Activated CD4-positive, alpha-beta memory T cell treated with anti-CD3 and anti-CD28 coated beads, Interleukin-2, amount 10 ng/mL, durations not matched to agents 7 days and 5 days (primary cell): ENCODE measurements at regions of chr20 and their contacts with region 1.

Region 1: GRCh38 chr20:54093423-54094267 is 23.3 kb upstream of the BCAS1 start:
- DNase-seq: no peak
- H3K4me3 Mint-ChIP-seq: no peak overlapping the region
- H3K27ac Mint-ChIP-seq: no peak overlapping the region
- H3K4me1 Mint-ChIP-seq: no peaks in the 10 kb centered on the region
- H3K27me3 Mint-ChIP-seq: peaks cover 12% of the 10 kb centered on the region

Region 2: GRCh38 chr20:53990768-53991450 is 102.7 kb before region 1 on chr20:
- CTCF ChIA-PET with region 1: no interaction called
- POLR2A ChIA-PET with region 1: no interaction called
- DNase-seq: no peak
- H3K4me3 Mint-ChIP-seq: no peak overlapping the region
- H3K27ac Mint-ChIP-seq: no peak overlapping the region
- H3K4me1 Mint-ChIP-seq: peaks cover 4% of the 10 kb centered on the region
- H3K27me3 Mint-ChIP-seq: peaks cover 39% of the 10 kb centered on the region

Region 3: GRCh38 chr20:54199721-54200176 is 106.1 kb after region 1 on chr20:
- CTCF ChIA-PET with region 1: interaction called, 36 read pairs
- POLR2A ChIA-PET with region 1: no interaction called
- DNase-seq: peak; percentile 71
- H3K4me3 Mint-ChIP-seq: no peak overlapping the region
- H3K27ac Mint-ChIP-seq: no peak overlapping the region
- H3K4me1 Mint-ChIP-seq: no peaks in the 10 kb centered on the region
- H3K27me3 Mint-ChIP-seq: peaks cover 13% of the 10 kb centered on the region

Region 4: GRCh38 chr20:54219751-54220426 is 126.2 kb after region 1 on chr20:
- CTCF ChIA-PET with region 1: no interaction called
- POLR2A ChIA-PET with region 1: no interaction called
- DNase-seq: no peak
- H3K4me3 Mint-ChIP-seq: no peak overlapping the region
- H3K27ac Mint-ChIP-seq: no peak overlapping the region
- H3K4me1 Mint-ChIP-seq: peaks cover 20% of the 10 kb centered on the region
- H3K27me3 Mint-ChIP-seq: no peaks in the 10 kb centered on the region